CD4-positive, alpha-beta T cell (primary cell): ENCODE measurements at regions of chrX and their contacts with region 1.

Region 1: GRCh38 chrX:13487731-13488523 is 81.5 kb upstream of the EGFL6 start:
- DNase-seq: peak; percentile 2 to 76 (median 22)
- ATAC-seq: peak; percentile 87
- H3K4me3 ChIP-seq: no peak overlapping the region
- H3K4me3 Mint-ChIP-seq: no peak overlapping the region
- H3K27ac ChIP-seq: no peak overlapping the region
- H3K27ac Mint-ChIP-seq: peak overlapping the region; percentile 77
- H3K4me1 ChIP-seq: peaks cover 11% of the 10 kb centered on the region
- H3K4me1 Mint-ChIP-seq: peaks cover 29% of the 10 kb centered on the region
- H3K27me3 ChIP-seq: no peaks in the 10 kb centered on the region
- H3K27me3 Mint-ChIP-seq: no peaks in the 10 kb centered on the region
- CTCF ChIP-seq: peak; percentile 55

Region 2: GRCh38 chrX:12814420-12814819 is 673.5 kb before region 1 on chrX:
- CTCF ChIA-PET with region 1: no interaction called
- POLR2A ChIA-PET with region 1: no interaction called
- intact Hi-C with region 1: loop called (anchors 2 to 5 kb)
- DNase-seq: peak in 13 of 14 experiments; percentile 5 to 67 (median 26)
- ATAC-seq: peak; percentile 63
- H3K4me3 ChIP-seq: no peak overlapping the region
- H3K4me3 Mint-ChIP-seq: no peak overlapping the region
- H3K27ac ChIP-seq: no peak overlapping the region
- H3K27ac Mint-ChIP-seq: no peak overlapping the region
- H3K4me1 ChIP-seq: no peaks in the 10 kb centered on the region
- H3K4me1 Mint-ChIP-seq: no peaks in the 10 kb centered on the region
- H3K27me3 ChIP-seq: no peaks in the 10 kb centered on the region
- H3K27me3 Mint-ChIP-seq: no peaks in the 10 kb centered on the region
- CTCF ChIP-seq: peak; percentile 29

Region 3: DNA sequence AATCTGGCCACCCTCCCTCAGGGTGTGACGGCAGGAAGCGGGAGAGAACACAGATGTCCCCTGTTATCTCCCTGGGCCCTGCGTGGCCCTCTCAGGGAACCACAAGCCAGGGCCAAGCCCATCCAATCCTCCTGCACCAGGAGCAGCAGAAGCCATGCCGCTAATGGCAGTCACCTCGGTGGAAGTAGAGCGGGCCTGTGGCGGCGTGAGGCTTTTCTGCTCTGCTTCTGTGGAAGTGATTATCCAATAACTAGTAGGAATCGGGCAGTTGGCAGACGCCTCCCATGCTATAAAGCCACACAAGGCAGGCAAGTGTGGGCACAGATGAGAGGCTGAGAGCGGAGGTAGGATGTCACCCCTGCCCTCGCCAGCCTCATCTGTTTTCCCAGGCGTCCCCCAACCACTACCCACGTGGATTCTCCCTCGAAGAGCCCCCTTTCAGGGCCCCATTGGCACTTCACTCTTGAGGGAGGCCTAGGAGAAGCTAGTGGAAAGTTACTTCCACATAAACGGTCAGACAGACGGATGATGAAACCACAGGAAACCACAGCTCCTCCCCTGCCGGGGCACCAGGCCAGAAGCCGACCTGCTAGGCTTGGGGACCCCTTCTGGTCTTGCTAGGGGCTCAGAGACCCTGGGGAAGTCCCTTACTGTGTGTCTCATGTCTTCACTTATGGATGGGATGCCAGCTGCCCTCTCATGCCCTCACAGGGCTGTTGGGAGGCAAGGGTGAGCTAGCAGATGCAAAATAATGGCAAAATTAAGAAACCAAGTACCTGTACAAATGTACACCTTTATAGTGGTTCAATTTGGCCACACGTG is 531.8 kb before region 1 on chrX:
- CTCF ChIA-PET with region 1: interaction called, 15 read pairs
- POLR2A ChIA-PET with region 1: interaction called, 16 read pairs
- intact Hi-C with region 1: no loop called
- DNase-seq: peak in 11 of 14 experiments; percentile 38 to 84 (median 61)
- ATAC-seq: peak; percentile 18
- H3K4me3 ChIP-seq: peak overlapping the region; percentile 47
- H3K4me3 Mint-ChIP-seq: peak overlapping the region; percentile 89
- H3K27ac ChIP-seq: peak overlapping the region; percentile 87 to 89
- H3K27ac Mint-ChIP-seq: peak overlapping the region; percentile 95
- H3K4me1 ChIP-seq: peaks cover 80% of the 10 kb centered on the region
- H3K4me1 Mint-ChIP-seq: peaks cover 87% of the 10 kb centered on the region
- H3K27me3 ChIP-seq: no peaks in the 10 kb centered on the region
- H3K27me3 Mint-ChIP-seq: no peaks in the 10 kb centered on the region
- CTCF ChIP-seq: no peak

Region 4: GRCh38 chrX:12967711-12968465 is 520.0 kb before region 1 on chrX:
- CTCF ChIA-PET with region 1: interaction called, 13 read pairs
- POLR2A ChIA-PET with region 1: interaction called, 9 read pairs
- intact Hi-C with region 1: loop called in 1 of 2 experiments (anchors 5 kb)
- DNase-seq: peak in 3 of 14 experiments; percentile 57 to 66 (median 58)
- ATAC-seq: peak; percentile 16
- H3K4me3 ChIP-seq: peak overlapping the region; percentile 42
- H3K4me3 Mint-ChIP-seq: peak overlapping the region; percentile 78
- H3K27ac ChIP-seq: peak overlapping the region; percentile 69 to 71
- H3K27ac Mint-ChIP-seq: peak overlapping the region; percentile 95
- H3K4me1 ChIP-seq: peaks cover 51% of the 10 kb centered on the region
- H3K4me1 Mint-ChIP-seq: peaks cover 53% of the 10 kb centered on the region
- H3K27me3 ChIP-seq: no peaks in the 10 kb centered on the region
- H3K27me3 Mint-ChIP-seq: no peaks in the 10 kb centered on the region
- CTCF ChIP-seq: no peak

Region 5: DNA sequence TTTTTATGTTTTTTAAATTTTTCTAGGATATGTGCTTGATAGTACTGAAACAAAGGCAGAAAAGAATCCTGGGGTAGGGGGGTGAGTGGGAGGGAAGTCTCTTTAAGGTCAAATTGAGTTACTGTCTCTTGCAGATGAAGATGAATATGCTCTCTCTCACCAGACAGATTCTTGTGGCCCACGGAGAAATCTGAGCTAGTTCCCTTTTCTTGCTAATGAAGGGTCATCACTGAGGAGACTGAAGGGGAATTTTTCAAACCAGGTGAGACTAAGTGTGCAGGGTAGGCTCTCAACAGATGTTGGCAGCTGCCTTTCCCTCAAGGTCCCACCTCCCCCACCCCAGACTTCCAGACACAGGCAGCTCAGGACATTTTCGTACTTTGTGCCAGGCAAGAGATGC is 465.0 kb before region 1 on chrX:
- CTCF ChIA-PET with region 1: no interaction called
- POLR2A ChIA-PET with region 1: no interaction called
- intact Hi-C with region 1: loop called in 1 of 2 experiments (anchors 5 kb)
- DNase-seq: no peak
- ATAC-seq: no peak
- H3K4me3 ChIP-seq: no peak overlapping the region
- H3K4me3 Mint-ChIP-seq: peak overlapping the region; percentile 60
- H3K27ac ChIP-seq: no peak overlapping the region
- H3K27ac Mint-ChIP-seq: peak overlapping the region; percentile 69
- H3K4me1 ChIP-seq: peaks cover 45% of the 10 kb centered on the region
- H3K4me1 Mint-ChIP-seq: peaks cover 53% of the 10 kb centered on the region
- H3K27me3 ChIP-seq: no peaks in the 10 kb centered on the region
- H3K27me3 Mint-ChIP-seq: no peaks in the 10 kb centered on the region
- CTCF ChIP-seq: no peak

Region 6: GRCh38 chrX:13545726-13546125 is 57.8 kb after region 1 on chrX:
- CTCF ChIA-PET with region 1: no interaction called
- POLR2A ChIA-PET with region 1: no interaction called
- intact Hi-C with region 1: no loop called
- DNase-seq: no peak
- ATAC-seq: no peak
- H3K4me3 ChIP-seq: no peak overlapping the region
- H3K4me3 Mint-ChIP-seq: no peak overlapping the region
- H3K27ac ChIP-seq: no peak overlapping the region
- H3K27ac Mint-ChIP-seq: no peak overlapping the region
- H3K4me1 ChIP-seq: no peaks in the 10 kb centered on the region
- H3K4me1 Mint-ChIP-seq: no peaks in the 10 kb centered on the region
- H3K27me3 ChIP-seq: no peaks in the 10 kb centered on the region
- H3K27me3 Mint-ChIP-seq: peaks cover 12% of the 10 kb centered on the region
- CTCF ChIP-seq: no peak